ENCODE measurements at regions of chr14 and their contacts with region 1.

Region 1: DNA sequence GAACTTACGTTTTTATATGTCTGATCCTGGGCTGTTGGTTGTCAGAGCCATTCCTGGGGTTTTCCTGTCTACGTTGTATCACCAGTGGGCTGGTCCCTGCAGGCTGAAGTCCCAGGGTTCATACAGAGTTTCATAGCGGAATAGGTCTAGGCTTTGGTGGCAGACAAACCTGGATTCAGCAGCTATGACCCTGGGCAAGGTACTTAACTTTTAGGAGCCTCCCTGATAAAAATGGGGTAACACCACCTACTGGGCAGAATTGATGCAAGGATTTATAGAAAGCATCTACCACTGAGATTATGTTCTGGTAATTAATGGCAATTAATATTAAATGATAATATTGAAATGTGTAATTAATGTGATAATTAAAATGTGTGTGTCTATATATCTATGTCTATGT is 141.2 kb downstream of the SYNE2 start:
- DNase-seq: no peak
- ATAC-seq: no peak
- H3K4me3 Mint-ChIP-seq: no peak overlapping the region
- H3K27ac Mint-ChIP-seq: no peak overlapping the region
- H3K4me1 Mint-ChIP-seq: peaks cover 3% of the 10 kb centered on the region
- H3K27me3 Mint-ChIP-seq: no peaks in the 10 kb centered on the region

Region 2: DNA sequence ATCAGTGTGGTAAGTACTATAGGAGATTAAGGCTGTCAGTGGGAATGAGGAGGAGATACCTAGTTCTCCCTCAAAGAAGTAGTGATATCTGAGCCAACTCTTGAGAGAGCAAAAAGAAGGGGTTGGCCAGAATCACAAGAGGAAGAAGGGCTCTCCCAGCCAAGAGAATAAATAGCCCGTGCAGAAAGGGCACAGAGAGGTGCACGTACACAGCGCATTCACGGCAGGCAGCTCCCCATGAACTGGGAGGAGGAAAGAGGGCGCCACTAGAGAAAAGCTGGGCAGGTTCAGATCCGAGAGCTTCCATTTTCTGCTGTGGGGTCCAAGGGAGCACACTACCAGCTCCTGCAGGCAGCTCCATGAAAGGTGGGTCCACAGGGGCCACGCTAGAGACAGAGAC is 510.7 kb before region 1 on chr14:
- CTCF ChIA-PET with region 1: no interaction called
- POLR2A ChIA-PET with region 1: no interaction called
- intact Hi-C with region 1: no loop called
- DNase-seq: no peak
- ATAC-seq: no peak
- H3K4me3 Mint-ChIP-seq: no peak overlapping the region
- H3K27ac Mint-ChIP-seq: no peak overlapping the region
- H3K4me1 Mint-ChIP-seq: peaks cover 50% of the 10 kb centered on the region
- H3K27me3 Mint-ChIP-seq: no peaks in the 10 kb centered on the region

Region 3: DNA sequence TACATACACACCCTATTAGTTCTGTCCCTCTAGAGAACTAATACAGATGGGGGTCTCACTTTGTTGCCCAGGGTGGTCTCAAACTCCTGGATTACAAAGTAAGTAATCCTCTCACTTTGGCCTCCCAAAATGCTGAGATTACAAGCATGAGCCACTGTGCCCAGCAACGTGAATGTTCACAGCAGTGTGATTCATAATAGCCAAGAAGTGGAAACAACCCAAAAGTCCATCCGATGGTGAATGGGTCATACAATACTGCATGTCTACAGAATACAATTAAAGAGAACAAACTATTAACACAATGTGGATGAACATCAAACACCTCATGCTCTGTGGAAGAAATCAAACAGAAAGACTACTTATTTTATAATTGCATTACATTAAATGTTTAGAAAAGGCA is 198.5 kb before region 1 on chr14:
- CTCF ChIA-PET with region 1: interaction called, 4 read pairs
- POLR2A ChIA-PET with region 1: no interaction called
- intact Hi-C with region 1: loop called (anchors 2 to 10 kb)
- DNase-seq: no peak
- ATAC-seq: no peak
- H3K4me3 Mint-ChIP-seq: no peak overlapping the region
- H3K27ac Mint-ChIP-seq: no peak overlapping the region
- H3K4me1 Mint-ChIP-seq: peaks cover 2% of the 10 kb centered on the region
- H3K27me3 Mint-ChIP-seq: peaks cover under 1% of the 10 kb centered on the region

Region 4: DNA sequence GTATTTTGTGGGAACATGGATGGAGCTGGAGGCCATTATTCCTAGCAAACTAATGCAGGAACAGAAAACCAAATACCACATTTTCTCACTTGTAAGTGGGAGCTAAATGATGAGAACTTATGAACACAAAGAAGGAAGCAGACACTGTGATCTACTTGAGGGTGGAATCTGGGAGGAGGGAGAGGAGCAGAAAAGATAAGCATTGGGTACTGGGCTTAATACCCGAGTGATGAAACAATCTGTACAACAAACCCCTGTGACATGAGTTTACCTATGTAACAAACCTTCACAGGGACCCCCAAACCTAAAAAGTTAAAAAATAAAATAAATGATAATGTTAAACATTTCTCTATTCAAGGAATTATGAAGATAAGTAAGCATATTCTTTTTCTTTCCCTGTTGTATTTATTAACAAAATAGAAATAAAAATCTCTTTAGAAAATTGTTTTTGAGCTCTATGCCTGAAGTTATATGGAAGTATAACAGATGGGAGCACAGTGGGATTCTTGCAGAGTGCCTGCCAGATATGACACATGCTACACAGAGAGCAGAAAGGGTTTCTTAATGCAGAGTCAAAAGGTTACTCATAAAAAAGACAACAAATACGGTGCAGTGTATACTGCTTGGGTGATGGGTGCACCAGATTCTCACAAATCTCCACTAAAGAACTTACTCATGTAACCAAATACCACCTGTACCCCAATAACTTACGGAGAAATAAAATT is 193.2 kb before region 1 on chr14:
- CTCF ChIA-PET with region 1: interaction called, 4 read pairs
- POLR2A ChIA-PET with region 1: no interaction called
- intact Hi-C with region 1: loop called (anchors 2 to 10 kb)
- DNase-seq: no peak
- ATAC-seq: no peak
- H3K4me3 Mint-ChIP-seq: no peak overlapping the region
- H3K27ac Mint-ChIP-seq: no peak overlapping the region
- H3K4me1 Mint-ChIP-seq: peaks cover 6% of the 10 kb centered on the region
- H3K27me3 Mint-ChIP-seq: peaks cover 2% of the 10 kb centered on the region

Measured in activated CD4-positive, alpha-beta T cell treated with anti-CD3 and anti-CD28 coated beads for 36 hours (primary cell).